HCT116 (cell line): ENCODE measurements at regions of chr16 and their contacts with region 1.

Region 1: DNA sequence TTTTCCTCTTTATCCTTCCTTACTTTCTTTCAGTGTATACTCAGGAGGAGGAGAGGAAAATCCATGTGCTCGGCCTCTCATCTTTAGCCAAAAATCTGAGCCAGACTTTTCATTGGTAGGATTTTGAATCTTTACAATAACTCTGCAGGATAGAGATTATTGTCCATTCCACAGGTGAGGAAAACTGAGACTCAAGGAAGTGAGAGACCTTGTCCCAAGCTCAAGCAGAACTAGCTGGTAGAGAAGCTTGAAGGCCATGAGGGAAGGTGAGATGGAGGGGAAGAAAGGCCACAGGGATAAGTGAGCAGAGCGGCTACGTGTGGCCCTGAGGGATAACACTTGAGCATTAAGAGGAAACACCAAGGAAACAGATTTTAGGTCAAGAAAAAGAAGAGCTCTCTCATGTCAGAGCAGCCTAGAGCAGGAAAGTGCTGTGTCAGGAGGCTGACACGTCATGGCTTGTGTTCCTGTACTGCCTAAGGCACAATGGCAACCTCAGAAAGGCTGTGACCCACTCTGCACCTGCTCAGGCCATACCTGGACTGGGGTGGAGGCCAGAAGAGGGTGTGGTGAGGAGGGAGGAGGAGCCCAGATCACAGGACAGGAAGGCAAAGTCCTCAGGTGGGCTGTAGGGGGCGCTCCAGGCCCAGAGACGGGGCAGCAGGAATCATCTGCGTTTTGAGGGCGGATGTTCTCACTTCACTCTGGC is 11.9 kb downstream of the MT4 start:
- DNase-seq: peak; percentile 72
- ATAC-seq: peak; percentile 100
- H3K4me3 ChIP-seq: no peak overlapping the region
- H3K27ac ChIP-seq: no peak overlapping the region
- H3K4me1 ChIP-seq: peaks cover 0 to 9% of the 10 kb centered on the region in 2 experiments; a peak in 2 of 4 replicates
- H3K27me3 ChIP-seq: no peaks in the 10 kb centered on the region
- CTCF ChIP-seq: peak; percentile 89 to 97 (median 93); a peak in 5 of 6 replicates
- POLR2A ChIP-seq: no peak
- RAD21 ChIP-seq: peak; percentile 98

Region 2: GRCh38 chr16:56700195-56700594 is 123.5 kb after region 1 on chr16:
- CTCF ChIA-PET with region 1: interaction called, 37 read pairs
- POLR2A ChIA-PET with region 1: no interaction called
- RAD21 ChIA-PET with region 1: interaction called, 3 to 5 read pairs
- intact Hi-C with region 1: loop called (anchors 1 kb)
- DNase-seq: no peak
- ATAC-seq: no peak
- H3K4me3 ChIP-seq: no peak overlapping the region
- H3K27ac ChIP-seq: no peak overlapping the region
- H3K4me1 ChIP-seq: peaks cover 0 to 11% of the 10 kb centered on the region in 2 experiments; a peak in 3 of 4 replicates
- H3K27me3 ChIP-seq: no peaks in the 10 kb centered on the region
- CTCF ChIP-seq: no peak
- POLR2A ChIP-seq: no peak
- RAD21 ChIP-seq: no peak

Region 3: GRCh38 chr16:56789360-56789759 is 212.6 kb after region 1 on chr16:
- CTCF ChIA-PET with region 1: interaction called, 4 read pairs
- POLR2A ChIA-PET with region 1: no interaction called
- RAD21 ChIA-PET with region 1: no interaction called
- intact Hi-C with region 1: loop called (anchors 1 kb)
- DNase-seq: peak; percentile 55
- ATAC-seq: peak; percentile 88
- H3K4me3 ChIP-seq: no peak overlapping the region
- H3K27ac ChIP-seq: no peak overlapping the region
- H3K4me1 ChIP-seq: no peaks in the 10 kb centered on the region
- H3K27me3 ChIP-seq: no peaks in the 10 kb centered on the region
- CTCF ChIP-seq: peak; percentile 59 to 65 (median 62); a peak in 5 of 6 replicates
- POLR2A ChIP-seq: no peak
- RAD21 ChIP-seq: peak; percentile 82

Region 4: DNA sequence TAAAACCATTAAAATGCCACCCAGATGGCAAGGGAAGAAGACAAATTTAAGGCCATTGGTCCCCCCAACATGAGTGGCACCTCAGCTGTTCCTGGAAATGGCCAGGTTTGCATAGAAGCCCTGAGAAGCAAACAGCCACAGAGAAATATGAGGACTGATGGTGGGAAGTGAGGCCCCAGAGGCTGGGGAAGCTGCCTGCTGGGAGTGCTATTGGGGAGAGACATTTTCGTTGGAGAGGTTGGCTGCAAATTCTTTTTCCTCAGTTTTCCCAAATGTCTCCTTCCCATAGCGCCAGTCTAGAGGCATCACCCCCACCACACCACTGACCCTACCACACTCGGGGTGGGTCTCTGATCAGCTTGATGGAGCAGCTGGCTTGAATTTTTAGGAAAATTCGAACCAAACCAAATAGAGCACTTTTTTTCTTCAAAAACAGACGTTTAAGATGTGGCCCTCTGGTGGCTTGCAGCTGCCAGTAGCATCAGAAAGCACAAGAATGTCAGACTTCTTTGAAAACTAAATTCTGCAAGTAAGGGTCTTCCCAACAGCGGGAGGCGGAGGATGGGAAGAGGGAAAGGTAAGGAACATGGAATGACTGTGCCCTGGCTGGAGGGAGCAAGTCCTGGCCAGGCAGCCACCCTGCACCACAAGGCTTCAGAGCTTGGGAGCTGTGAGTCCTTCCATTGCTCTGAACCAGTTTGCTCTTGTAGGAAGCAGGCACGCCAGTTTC is 275.1 kb after region 1 on chr16:
- CTCF ChIA-PET with region 1: no interaction called
- POLR2A ChIA-PET with region 1: no interaction called
- RAD21 ChIA-PET with region 1: no interaction called
- intact Hi-C with region 1: loop called (anchors 2 kb)
- DNase-seq: no peak
- ATAC-seq: no peak
- H3K4me3 ChIP-seq: no peak overlapping the region
- H3K27ac ChIP-seq: no peak overlapping the region
- H3K4me1 ChIP-seq: peaks cover 22 to 41% of the 10 kb centered on the region in 2 experiments
- H3K27me3 ChIP-seq: no peaks in the 10 kb centered on the region
- CTCF ChIP-seq: peak; percentile 30 to 63 (median 59); a peak in 5 of 6 replicates
- POLR2A ChIP-seq: no peak
- RAD21 ChIP-seq: peak; percentile 41

Region 5: DNA sequence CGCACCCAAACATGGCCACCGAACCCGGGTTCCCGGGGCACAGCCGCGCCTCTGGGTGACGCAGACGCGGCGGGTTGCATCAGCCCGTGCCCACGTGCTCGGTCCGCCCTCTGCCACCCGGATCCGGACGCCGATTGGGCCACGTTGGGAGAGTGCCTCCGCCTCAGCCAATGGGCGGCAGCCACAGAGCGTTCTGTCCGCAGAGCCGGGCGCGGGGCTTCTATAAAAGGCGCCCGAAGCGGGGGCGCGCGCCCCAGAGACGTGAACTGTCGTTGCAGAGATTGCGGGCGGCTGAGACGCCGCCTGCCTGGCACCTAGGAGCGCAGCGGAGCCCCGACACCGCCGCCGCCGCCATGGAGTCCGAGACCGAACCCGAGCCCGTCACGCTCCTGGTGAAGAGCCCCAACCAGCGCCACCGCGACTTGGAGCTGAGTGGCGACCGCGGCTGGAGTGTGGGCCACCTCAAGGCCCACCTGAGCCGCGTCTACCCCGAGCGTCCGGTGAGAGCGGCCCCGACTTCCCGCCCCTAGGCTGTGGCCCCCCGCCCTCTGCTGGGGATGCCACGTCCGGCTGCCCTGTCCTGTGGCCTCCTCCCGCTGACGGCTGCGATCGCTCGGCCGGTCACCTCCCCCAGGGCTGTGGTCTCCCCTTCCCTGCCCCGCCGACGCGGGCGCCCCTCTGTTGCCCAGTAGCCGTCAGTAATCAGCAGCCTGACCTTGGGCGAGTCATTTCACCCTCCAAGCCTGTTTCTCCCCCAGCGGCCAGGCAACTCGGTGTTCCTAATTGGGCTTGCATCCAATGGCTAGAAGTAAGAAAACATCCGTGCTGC is 355.4 kb after region 1 on chr16 and contains the start of gene HERPUD1:
- CTCF ChIA-PET with region 1: no interaction called
- POLR2A ChIA-PET with region 1: no interaction called
- RAD21 ChIA-PET with region 1: no interaction called
- intact Hi-C with region 1: loop called (anchors 10 kb)
- DNase-seq: peak; percentile 92
- ATAC-seq: peak; percentile 95
- H3K4me3 ChIP-seq: peak within 1 kb of the TSS; percentile 97 to 98
- H3K27ac ChIP-seq: peak within 1 kb of the TSS; percentile 61
- H3K4me1 ChIP-seq: peaks cover 7 to 20% of the 10 kb centered on the region in 2 experiments; a peak in 3 of 4 replicates
- H3K27me3 ChIP-seq: no peaks in the 10 kb centered on the region
- CTCF ChIP-seq: no peak
- POLR2A ChIP-seq: peak; percentile 94
- RAD21 ChIP-seq: no peak
- total RNA-seq, gene HERPUD1: 113 TPM

Region 6: DNA sequence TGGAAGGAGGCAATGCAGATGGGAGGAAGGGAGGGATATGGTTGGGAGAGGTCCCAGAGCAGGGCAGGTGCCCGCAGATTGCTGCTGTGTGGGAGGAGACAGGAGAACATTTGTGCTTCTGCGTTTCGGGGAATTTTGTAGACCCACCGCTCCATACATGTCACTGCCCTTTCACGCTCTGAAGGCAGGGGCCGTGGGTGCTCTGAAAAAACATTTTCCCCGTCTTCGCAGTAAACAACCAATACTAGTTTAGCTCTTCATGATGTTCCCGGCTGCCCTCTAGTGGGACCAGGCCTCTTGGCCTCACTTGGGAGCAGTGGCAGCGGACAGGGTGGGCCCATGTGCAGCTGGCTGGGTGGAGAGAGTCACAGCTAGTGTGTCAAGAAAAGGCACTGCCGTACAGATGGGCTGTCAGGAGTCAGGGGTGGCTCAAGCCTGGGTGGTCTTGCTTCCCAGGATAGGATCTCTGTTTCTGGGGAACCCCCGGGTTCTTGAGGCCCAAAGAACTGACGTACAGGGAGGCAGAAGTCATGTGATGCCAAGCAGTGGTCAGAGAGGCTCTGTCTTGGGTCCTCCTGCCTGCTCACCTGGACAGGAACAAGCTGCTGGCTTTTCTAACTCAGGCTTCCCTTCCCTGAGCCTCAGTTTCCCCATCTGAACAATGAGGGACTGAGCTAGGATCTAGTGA is 469.1 kb after region 1 on chr16:
- CTCF ChIA-PET with region 1: no interaction called
- POLR2A ChIA-PET with region 1: no interaction called
- RAD21 ChIA-PET with region 1: no interaction called
- intact Hi-C with region 1: loop called (anchors 5 kb)
- DNase-seq: peak; percentile 21
- ATAC-seq: peak; percentile 97
- H3K4me3 ChIP-seq: no peak overlapping the region
- H3K27ac ChIP-seq: no peak overlapping the region
- H3K4me1 ChIP-seq: peaks cover 3 to 6% of the 10 kb centered on the region in 2 experiments; a peak in 2 of 4 replicates
- H3K27me3 ChIP-seq: no peaks in the 10 kb centered on the region
- CTCF ChIP-seq: peak; percentile 54 to 94 (median 64)
- POLR2A ChIP-seq: no peak
- RAD21 ChIP-seq: peak; percentile 72